ENCODE measurements at regions of chr4 and their contacts with region 1.

Region 1: GRCh38 chr4:39541987-39542610 is 14.9 kb upstream of the UGDH start:
- DNase-seq: no peak
- ATAC-seq: no peak
- H3K4me3 ChIP-seq: no peak overlapping the region
- H3K4me3 Mint-ChIP-seq: no peak overlapping the region
- H3K27ac ChIP-seq: no peak overlapping the region
- H3K27ac Mint-ChIP-seq: no peak overlapping the region
- H3K4me1 ChIP-seq: no peaks in the 10 kb centered on the region
- H3K4me1 Mint-ChIP-seq: no peaks in the 10 kb centered on the region
- H3K27me3 ChIP-seq: no peaks in the 10 kb centered on the region
- H3K27me3 Mint-ChIP-seq: no peaks in the 10 kb centered on the region
- CTCF ChIP-seq: no peak

Region 2: GRCh38 chr4:40403081-40403480 is 861.0 kb after region 1 on chr4:
- CTCF ChIA-PET with region 1: no interaction called
- POLR2A ChIA-PET with region 1: interaction called, 15 read pairs
- intact Hi-C with region 1: no loop called
- DNase-seq: no peak
- ATAC-seq: no peak
- H3K4me3 ChIP-seq: no peak overlapping the region
- H3K4me3 Mint-ChIP-seq: no peak overlapping the region
- H3K27ac ChIP-seq: no peak overlapping the region
- H3K27ac Mint-ChIP-seq: no peak overlapping the region
- H3K4me1 ChIP-seq: no peaks in the 10 kb centered on the region
- H3K4me1 Mint-ChIP-seq: no peaks in the 10 kb centered on the region
- H3K27me3 ChIP-seq: no peaks in the 10 kb centered on the region
- H3K27me3 Mint-ChIP-seq: no peaks in the 10 kb centered on the region
- CTCF ChIP-seq: no peak

Measured in B cell (primary cell).